ENCODE measurements at regions of chr17 and their contacts with region 1.

Region 1: GRCh38 chr17:56598466-56599148 is 5.1 kb downstream of the NOG start:
- DNase-seq: no peak
- ATAC-seq: peak; percentile 23
- H3K4me3 ChIP-seq: no peak overlapping the region
- H3K4me3 Mint-ChIP-seq: peak overlapping the region; percentile 30 to 96 (median 84)
- H3K27ac ChIP-seq: peak overlapping the region; percentile 88
- H3K27ac Mint-ChIP-seq: peak overlapping the region in 8 of 9 donors; percentile 98 to 100 (median 99)
- H3K4me1 ChIP-seq: peaks cover 8 to 58% of the 10 kb centered on the region in 2 donors
- H3K4me1 Mint-ChIP-seq: peaks cover 34 to 70% (median 62%) of the 10 kb centered on the region in 7 donors
- H3K27me3 ChIP-seq: peaks cover 0 to 8% of the 10 kb centered on the region in 2 donors
- H3K27me3 Mint-ChIP-seq: peaks cover 0 to 41% (median 9%) of the 10 kb centered on the region in 5 donors

Region 2: DNA sequence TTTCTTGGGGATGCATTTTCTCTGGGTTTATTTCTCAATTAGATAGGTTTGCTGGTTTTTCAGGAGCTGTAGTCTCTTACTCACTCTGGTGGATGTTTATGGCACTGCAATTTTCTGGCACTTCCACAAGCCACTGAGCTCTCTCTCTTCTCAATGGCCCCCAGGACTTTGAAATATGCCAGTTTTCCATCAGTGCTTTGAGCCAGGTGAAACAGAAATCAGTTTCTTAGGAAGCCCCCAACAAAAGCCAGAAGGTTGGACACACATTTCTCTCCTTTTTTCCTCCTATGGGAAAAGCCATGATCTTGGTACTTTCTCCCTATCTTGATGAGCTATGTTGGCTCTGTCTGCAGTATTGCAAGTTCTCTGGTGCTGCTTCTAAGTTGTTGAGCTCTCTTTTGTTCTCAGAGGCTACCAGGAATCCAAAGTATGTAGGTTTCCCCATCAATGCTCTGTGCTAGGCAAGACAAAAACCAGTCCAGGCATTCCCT is 996.7 kb before region 1 on chr17:
- CTCF ChIA-PET with region 1: no interaction called
- POLR2A ChIA-PET with region 1: no interaction called
- intact Hi-C with region 1: no loop called
- DNase-seq: peak in 6 of 9 donors; percentile 13 to 44 (median 28)
- ATAC-seq: peak; percentile 50
- H3K4me3 ChIP-seq: no peak overlapping the region
- H3K4me3 Mint-ChIP-seq: no peak overlapping the region
- H3K27ac ChIP-seq: no peak overlapping the region
- H3K27ac Mint-ChIP-seq: no peak overlapping the region
- H3K4me1 ChIP-seq: no peaks in the 10 kb centered on the region
- H3K4me1 Mint-ChIP-seq: no peaks in the 10 kb centered on the region
- H3K27me3 ChIP-seq: no peaks in the 10 kb centered on the region
- H3K27me3 Mint-ChIP-seq: peaks cover 11 to 28% (median 19%) of the 10 kb centered on the region in 5 donors

Region 3: GRCh38 chr17:56614522-56614921 is 15.9 kb after region 1 on chr17:
- CTCF ChIA-PET with region 1: interaction called, 5 read pairs
- POLR2A ChIA-PET with region 1: interaction called, 347 read pairs
- intact Hi-C with region 1: loop called in 1 of 2 experiments (anchors 2 kb)
- DNase-seq: no peak
- ATAC-seq: no peak
- H3K4me3 ChIP-seq: no peak overlapping the region
- H3K4me3 Mint-ChIP-seq: no peak overlapping the region
- H3K27ac ChIP-seq: no peak overlapping the region
- H3K27ac Mint-ChIP-seq: peak overlapping the region in 1 of 9 donors; percentile 77
- H3K4me1 ChIP-seq: no peaks in the 10 kb centered on the region
- H3K4me1 Mint-ChIP-seq: peaks cover 0 to 46% (median 27%) of the 10 kb centered on the region in 7 donors
- H3K27me3 ChIP-seq: no peaks in the 10 kb centered on the region
- H3K27me3 Mint-ChIP-seq: peaks cover 0 to 6% (median 0%) of the 10 kb centered on the region in 5 donors

Region 4: DNA sequence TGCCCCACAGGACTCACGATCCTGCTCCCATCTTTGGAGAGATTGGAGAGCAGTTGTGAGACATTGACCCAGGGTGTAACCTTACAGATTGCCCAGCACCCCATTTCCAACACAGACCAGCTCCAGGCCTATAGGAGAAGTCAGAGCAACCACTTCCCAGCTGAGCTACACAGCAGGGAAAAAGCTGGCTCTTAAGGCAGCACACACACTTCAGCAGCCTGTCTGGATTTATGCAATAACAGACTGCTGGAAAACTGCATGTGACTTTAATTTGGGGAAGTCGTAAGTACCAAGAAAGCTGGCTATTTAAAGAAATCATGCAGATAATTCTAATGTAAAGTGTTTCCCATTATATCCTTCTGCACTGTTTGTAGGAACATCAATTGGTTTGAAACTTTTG is 25.7 kb after region 1 on chr17:
- CTCF ChIA-PET with region 1: interaction called, 26 read pairs
- POLR2A ChIA-PET with region 1: interaction called, 52 read pairs
- intact Hi-C with region 1: loop called in 1 of 2 experiments (anchors 1 kb)
- DNase-seq: no peak
- ATAC-seq: no peak
- H3K4me3 ChIP-seq: no peak overlapping the region
- H3K4me3 Mint-ChIP-seq: no peak overlapping the region
- H3K27ac ChIP-seq: no peak overlapping the region
- H3K27ac Mint-ChIP-seq: peak overlapping the region in 1 of 9 donors; percentile 41
- H3K4me1 ChIP-seq: no peaks in the 10 kb centered on the region
- H3K4me1 Mint-ChIP-seq: peaks cover 0 to 18% (median 8%) of the 10 kb centered on the region in 7 donors
- H3K27me3 ChIP-seq: no peaks in the 10 kb centered on the region
- H3K27me3 Mint-ChIP-seq: peaks cover 0 to 8% (median 0%) of the 10 kb centered on the region in 5 donors

Region 5: GRCh38 chr17:56629531-56630075 is 31.0 kb after region 1 on chr17:
- CTCF ChIA-PET with region 1: interaction called, 26 read pairs
- POLR2A ChIA-PET with region 1: interaction called, 52 read pairs
- intact Hi-C with region 1: loop called in 1 of 2 experiments (anchors 1 kb)
- DNase-seq: peak in 7 of 9 donors; percentile 19 to 44 (median 33)
- ATAC-seq: peak; percentile 62
- H3K4me3 ChIP-seq: no peak overlapping the region
- H3K4me3 Mint-ChIP-seq: no peak overlapping the region
- H3K27ac ChIP-seq: no peak overlapping the region
- H3K27ac Mint-ChIP-seq: peak overlapping the region in 2 of 9 donors; percentile 14 to 18
- H3K4me1 ChIP-seq: peaks cover 0 to 10% of the 10 kb centered on the region in 2 donors
- H3K4me1 Mint-ChIP-seq: peaks cover 0 to 31% (median 9%) of the 10 kb centered on the region in 7 donors
- H3K27me3 ChIP-seq: no peaks in the 10 kb centered on the region
- H3K27me3 Mint-ChIP-seq: peaks cover 0 to 8% (median 0%) of the 10 kb centered on the region in 5 donors

Region 6: GRCh38 chr17:56653877-56654276 is 55.3 kb after region 1 on chr17:
- CTCF ChIA-PET with region 1: interaction called, 46 read pairs
- POLR2A ChIA-PET with region 1: no interaction called
- intact Hi-C with region 1: loop called (anchors 1 to 2 kb)
- DNase-seq: peak; percentile 15 to 88 (median 83)
- ATAC-seq: peak; percentile 99
- H3K4me3 ChIP-seq: no peak overlapping the region
- H3K4me3 Mint-ChIP-seq: peak overlapping the region in 4 of 10 donors; percentile 10 to 55 (median 34)
- H3K27ac ChIP-seq: peak overlapping the region; percentile 59
- H3K27ac Mint-ChIP-seq: peak overlapping the region in 8 of 9 donors; percentile 44 to 93 (median 88)
- H3K4me1 ChIP-seq: peaks cover 0 to 6% of the 10 kb centered on the region in 2 donors
- H3K4me1 Mint-ChIP-seq: peaks cover 5 to 21% (median 9%) of the 10 kb centered on the region in 7 donors
- H3K27me3 ChIP-seq: no peaks in the 10 kb centered on the region
- H3K27me3 Mint-ChIP-seq: peaks cover 0 to 18% (median 0%) of the 10 kb centered on the region in 5 donors